ENCODE measurements at regions of chr10 and their contacts with region 1.

Region 1: GRCh38 chr10:45672181-45673073 is at the start of gene ZFAND4:
- DNase-seq: peak; percentile 97
- H3K4me3 Mint-ChIP-seq: peak within 1 kb of the TSS; percentile 89
- H3K27ac Mint-ChIP-seq: peak within 1 kb of the TSS; percentile 93
- H3K4me1 Mint-ChIP-seq: peaks cover 35% of the 10 kb centered on the region
- H3K27me3 Mint-ChIP-seq: peaks cover 6% of the 10 kb centered on the region

Region 2: DNA sequence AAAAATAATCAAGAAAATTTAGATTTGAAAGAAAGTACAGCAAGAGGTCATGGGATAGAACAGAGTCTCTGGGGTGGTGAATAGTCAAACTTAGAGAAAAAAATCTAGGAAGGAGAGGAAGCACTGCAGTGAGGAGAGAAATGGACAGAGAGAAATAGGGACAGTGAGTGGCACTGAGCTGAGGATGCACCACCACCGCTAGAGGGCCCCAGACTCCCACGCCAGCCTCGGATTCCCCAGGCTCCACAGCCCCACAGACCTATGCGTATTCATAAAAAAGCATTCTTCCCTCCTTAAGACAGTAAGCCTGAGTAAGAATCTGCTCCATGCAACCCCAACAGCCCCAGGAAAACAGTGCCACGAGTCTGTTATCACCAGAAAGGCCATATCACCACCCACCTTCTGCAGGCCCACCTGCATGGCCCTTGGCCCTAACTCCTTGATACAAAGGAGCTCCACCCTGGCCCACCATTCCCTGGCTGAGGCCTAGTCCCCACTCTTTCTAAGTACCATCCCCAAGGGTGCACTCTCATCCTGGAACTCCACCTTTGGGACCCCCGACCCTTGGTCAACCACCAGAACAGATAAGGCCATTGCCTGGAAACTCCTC is 207.4 kb before region 1 on chr10:
- CTCF ChIA-PET with region 1: interaction called, 12 read pairs
- DNase-seq: peak; percentile 87
- H3K4me3 Mint-ChIP-seq: no peak overlapping the region
- H3K27ac Mint-ChIP-seq: peak overlapping the region; percentile 49
- H3K4me1 Mint-ChIP-seq: peaks cover 39% of the 10 kb centered on the region
- H3K27me3 Mint-ChIP-seq: no peaks in the 10 kb centered on the region

Region 3: DNA sequence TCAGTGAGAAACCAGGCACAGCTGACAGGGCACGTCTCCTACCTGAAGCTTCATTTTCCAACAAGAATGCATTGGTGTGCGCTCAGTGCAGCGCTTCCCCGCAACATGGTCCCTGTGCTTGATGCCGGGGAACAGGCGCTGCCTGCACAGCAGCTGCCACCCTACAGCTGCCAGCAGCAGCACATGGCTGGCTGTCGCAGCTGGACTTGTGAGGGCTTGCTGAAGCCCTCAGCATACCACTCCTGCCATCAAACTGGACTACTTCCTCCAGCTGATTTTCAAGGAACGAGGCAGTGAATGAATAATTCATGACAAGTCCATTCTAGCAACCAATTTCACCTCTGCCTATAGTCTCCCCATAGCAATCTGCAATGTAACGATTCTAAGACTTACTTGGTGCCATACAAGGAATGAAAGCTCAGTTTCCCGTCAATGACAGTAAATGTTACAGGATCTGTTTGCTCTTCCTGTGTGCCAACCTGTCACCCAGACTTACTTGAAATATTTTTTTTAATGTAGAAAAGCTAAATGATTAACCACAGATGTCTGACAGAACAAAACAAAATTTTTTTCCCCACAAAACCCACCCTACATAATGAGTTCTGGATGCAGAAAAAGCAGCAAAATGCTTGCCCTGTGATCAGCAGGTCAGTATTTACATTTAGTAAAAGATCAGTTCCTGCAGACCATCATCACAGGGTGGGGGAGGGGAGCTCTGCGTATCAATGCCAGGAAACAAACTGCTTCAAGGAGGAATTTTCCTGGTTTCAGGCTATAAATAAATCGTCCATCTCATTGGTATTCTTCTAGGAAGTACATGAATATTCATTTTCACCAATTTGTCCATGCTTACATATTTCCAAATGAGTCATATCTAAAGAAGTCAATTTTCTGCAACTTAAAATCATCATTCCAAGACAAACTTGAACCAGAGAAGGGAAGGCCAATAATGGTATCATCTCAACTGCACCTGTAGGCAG is 157.8 kb before region 1 on chr10:
- CTCF ChIA-PET with region 1: no interaction called
- DNase-seq: no peak
- H3K4me3 Mint-ChIP-seq: no peak overlapping the region
- H3K27ac Mint-ChIP-seq: no peak overlapping the region
- H3K4me1 Mint-ChIP-seq: peaks cover 3% of the 10 kb centered on the region
- H3K27me3 Mint-ChIP-seq: no peaks in the 10 kb centered on the region

Region 4: DNA sequence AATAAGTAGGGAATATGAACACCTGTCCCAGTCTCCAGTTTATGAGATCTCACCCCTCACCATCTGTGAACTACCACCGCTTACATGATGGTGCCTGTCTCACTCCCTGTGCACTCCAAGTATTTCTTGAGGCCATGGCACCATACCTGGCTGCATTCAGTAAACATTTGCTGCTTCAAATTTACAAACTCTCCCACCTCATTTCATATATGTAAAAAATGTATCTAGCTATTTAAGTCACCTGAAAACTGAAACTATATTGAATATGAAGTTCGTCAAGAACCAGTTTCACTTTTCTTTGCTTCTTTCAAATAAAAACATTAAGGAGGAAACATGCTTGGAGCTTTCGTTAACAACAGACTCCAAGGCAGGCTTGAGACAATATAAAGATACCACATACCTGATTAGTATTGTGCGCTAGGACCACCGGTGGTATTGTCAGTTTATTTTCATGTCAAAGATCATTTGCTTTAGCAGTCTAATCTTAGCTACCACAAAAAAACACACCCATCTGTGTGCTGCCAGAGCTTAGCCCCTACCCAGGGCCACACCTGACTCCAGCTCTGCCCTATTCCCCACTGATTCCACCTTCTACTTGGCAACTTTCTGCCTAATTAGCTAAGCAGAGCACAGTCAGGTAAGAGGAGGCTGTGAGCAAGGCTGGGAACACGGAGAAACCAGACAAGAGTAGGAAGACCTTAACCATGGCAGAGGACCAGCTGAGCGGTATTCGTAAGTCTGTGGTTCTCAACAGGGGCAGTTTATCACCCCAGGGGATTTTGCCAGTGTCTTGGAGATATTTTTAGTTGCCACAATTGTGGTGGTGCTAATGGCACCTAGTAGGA is 91.8 kb before region 1 on chr10:
- CTCF ChIA-PET with region 1: interaction called, 11 read pairs
- DNase-seq: peak; percentile 28
- H3K4me3 Mint-ChIP-seq: peak overlapping the region; percentile 84
- H3K27ac Mint-ChIP-seq: peak overlapping the region; percentile 94
- H3K4me1 Mint-ChIP-seq: peaks cover 33% of the 10 kb centered on the region
- H3K27me3 Mint-ChIP-seq: no peaks in the 10 kb centered on the region

Region 5: DNA sequence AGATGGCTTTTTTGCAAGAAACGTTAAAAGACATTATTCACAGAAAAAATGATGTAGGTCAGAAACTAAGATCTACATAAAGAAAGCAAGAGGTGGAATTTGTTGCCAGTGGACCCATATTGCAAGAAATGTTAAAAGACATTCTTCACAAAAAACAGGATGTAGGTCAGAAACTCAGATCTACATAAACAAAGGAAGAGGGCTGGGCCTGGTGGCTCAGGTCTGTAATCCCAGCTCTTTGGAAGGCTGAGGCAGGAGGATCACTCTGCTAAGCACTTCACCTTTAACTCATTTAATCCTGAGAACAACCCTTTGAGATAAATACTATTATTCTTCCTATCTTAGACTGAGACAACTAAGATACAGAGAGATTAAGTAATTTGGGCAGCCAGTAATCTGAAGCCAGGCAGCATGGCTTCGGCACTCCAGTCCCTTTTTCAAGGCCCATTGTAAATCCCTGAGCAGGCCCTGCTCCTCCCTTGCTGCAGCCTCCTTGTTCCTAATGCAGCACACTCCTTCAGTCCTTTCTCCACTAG is 11.5 kb before region 1 on chr10:
- CTCF ChIA-PET with region 1: no interaction called
- DNase-seq: no peak
- H3K4me3 Mint-ChIP-seq: no peak overlapping the region
- H3K27ac Mint-ChIP-seq: peak overlapping the region; percentile 87
- H3K4me1 Mint-ChIP-seq: peaks cover 29% of the 10 kb centered on the region
- H3K27me3 Mint-ChIP-seq: no peaks in the 10 kb centered on the region